ENCODE measurements at regions of chr20 and their contacts with region 1.

Region 1: GRCh38 chr20:38165089-38165989 is at the start of gene TGM2:
- DNase-seq: peak; percentile 72
- H3K4me3 ChIP-seq: peak within 1 kb of the TSS; percentile 30 to 43
- H3K27ac ChIP-seq: peak within 1 kb of the TSS; percentile 55 to 64
- H3K4me1 ChIP-seq: peaks cover 2% of the 10 kb centered on the region
- H3K27me3 ChIP-seq: no peaks in the 10 kb centered on the region
- CTCF ChIP-seq: peak; percentile 91 to 97 (median 94)
- POLR2A ChIP-seq: peak; percentile 60
- total RNA-seq, gene TGM2: 39.6 to 157 TPM

Region 2: DNA sequence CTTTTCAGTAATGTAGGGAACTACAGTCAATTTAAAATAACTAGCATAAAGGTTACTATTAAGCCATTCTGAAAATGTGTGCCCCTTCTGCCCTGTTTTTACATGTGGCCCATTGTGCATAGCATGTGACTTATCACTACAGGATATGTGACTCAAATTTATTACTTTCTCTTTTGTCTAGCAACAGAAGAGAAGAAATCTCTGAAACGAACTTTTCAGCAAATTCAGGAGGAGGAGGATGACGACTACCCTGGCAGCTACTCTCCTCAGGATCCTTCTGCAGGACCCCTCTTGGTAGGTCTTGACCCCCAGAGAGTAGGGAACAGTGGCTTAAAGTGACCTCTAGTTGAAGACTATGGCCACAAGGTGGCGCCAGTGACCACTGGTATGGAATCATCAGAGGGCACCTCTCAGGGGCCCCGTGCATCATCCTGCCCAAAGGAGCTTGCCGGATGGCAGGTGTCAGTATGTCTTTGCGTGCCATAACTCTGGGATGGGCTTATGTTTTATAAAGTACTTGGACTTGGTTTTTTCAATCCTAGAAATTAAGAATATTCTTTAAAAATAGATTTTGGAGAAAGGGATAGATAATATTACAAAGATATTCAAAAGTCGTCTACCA is 107.9 kb before region 1 on chr20:
- intact Hi-C with region 1: loop called (anchors 1 kb)
- DNase-seq: peak; percentile 82
- H3K4me3 ChIP-seq: no peak overlapping the region
- H3K27ac ChIP-seq: no peak overlapping the region
- H3K4me1 ChIP-seq: no peaks in the 10 kb centered on the region
- H3K27me3 ChIP-seq: no peaks in the 10 kb centered on the region
- CTCF ChIP-seq: peak; percentile 84 to 92 (median 86)
- POLR2A ChIP-seq: no peak

Region 3: DNA sequence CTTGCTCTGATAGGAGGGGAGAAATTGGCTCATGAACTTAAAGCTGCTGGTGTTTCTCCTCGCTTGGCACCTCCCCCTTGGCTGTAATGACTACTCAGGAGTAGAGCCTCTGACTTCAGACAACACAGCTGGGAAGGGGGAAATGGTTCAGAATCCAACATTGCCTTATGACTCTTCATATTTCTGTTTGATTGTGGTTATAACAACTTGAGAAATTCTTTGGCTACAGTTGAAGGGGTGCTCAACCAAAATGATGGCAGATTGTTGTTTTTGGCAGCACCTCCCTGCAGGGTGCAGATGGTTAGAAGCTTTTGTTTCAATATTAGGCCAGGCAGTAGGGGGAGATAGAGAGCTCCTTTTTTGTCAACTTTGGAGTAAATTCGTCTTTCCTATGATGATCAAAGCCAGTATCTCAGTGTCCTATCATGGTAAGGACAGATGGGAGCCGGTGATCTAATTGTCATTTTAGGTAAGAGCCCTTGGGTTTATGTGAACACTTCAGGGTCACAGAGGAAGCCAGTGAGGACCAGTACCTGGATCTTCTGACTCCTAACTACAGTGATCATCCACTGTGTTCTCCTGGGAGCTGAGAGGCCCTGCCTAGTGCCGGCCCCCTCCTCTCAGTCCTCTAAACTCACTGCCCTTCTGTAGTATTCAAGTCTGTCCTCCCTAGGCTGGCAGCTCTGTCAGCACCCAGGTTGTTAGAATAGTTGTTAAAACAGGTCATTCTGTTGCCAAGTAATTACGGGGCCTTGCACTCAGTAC is 91.8 kb before region 1 on chr20:
- intact Hi-C with region 1: loop called (anchors 5 kb)
- DNase-seq: peak; percentile 44
- H3K4me3 ChIP-seq: no peak overlapping the region
- H3K27ac ChIP-seq: peak overlapping the region; percentile 14 to 43
- H3K4me1 ChIP-seq: peaks cover 5% of the 10 kb centered on the region
- H3K27me3 ChIP-seq: no peaks in the 10 kb centered on the region
- CTCF ChIP-seq: peak; percentile 39 to 82 (median 76)
- POLR2A ChIP-seq: no peak

Region 4: DNA sequence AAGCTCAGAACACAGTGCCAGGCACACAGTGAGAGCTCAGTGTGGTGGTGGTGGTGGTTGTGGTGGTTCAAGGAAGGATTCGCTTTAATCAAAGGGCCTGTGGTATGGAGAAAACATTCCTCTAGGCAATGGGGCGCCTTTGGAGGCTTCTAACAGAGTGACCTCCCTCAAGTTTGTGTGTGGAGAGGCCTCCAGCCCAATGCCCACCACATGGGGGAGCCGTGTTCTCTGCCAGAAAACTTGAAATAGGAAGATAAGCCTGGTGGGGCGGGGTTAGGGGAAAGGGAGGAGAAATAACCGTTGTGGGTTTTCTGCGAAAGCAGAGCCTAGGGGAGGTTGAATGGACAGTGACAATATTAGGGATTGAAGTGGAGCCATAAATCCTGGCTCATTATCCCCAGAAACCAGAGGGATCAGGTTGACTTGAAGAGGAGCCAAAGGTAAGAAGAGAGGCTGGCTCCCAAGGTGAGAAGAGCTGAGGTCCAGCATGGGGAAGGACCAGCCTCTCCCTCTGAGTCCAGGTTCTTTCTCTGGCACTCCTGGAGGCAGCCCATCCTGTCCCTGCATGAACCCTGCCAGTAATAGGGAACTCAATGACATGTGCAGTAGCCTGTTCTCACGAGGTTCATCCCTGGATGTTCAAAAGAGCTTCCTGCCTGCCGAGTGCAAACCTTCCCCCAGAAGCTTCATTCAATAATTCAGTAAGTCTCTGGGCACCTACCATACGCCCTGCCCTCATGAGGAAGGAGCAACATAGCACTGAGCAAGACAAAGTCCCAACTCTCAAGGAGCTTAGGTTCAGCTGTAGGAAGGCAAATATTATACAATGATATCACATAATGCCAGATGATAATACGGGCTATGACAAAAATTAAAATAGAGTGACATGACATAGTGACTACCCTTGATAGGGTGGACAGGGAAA is 51.7 kb before region 1 on chr20:
- intact Hi-C with region 1: loop called (anchors 2 kb)
- DNase-seq: no peak
- H3K4me3 ChIP-seq: no peak overlapping the region
- H3K27ac ChIP-seq: no peak overlapping the region
- H3K4me1 ChIP-seq: peaks cover 11% of the 10 kb centered on the region
- H3K27me3 ChIP-seq: no peaks in the 10 kb centered on the region
- CTCF ChIP-seq: no peak
- POLR2A ChIP-seq: no peak

Region 5: DNA sequence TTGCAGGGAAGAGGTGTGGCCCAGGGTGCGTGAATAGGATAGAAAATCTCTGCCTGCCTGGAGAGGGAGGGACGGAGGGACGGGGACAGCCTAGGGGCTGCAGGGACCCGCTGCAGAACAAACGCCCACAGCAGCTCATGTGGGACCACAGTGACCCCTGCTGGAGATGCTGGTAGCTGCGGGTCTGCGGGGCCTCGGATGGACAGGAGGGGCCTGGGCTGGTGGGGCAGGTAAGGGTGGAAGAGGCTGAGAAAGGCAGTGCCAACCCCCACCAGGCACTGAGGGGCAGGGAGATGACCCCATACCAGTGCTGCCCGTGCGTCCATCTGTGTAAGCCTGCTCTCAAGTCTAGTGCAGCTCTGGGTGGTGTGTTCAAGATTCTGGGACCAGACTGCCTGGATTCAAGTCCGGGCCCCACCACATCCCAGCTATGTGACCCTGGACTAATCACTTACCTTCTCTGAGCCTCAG is 55.8 kb after region 1 on chr20:
- intact Hi-C with region 1: loop called (anchors 5 kb)
- DNase-seq: no peak
- H3K4me3 ChIP-seq: no peak overlapping the region
- H3K27ac ChIP-seq: no peak overlapping the region
- H3K4me1 ChIP-seq: peaks cover 2% of the 10 kb centered on the region
- H3K27me3 ChIP-seq: no peaks in the 10 kb centered on the region
- CTCF ChIP-seq: peak; percentile 37 to 89 (median 79)
- POLR2A ChIP-seq: peak; percentile 11

Region 6: DNA sequence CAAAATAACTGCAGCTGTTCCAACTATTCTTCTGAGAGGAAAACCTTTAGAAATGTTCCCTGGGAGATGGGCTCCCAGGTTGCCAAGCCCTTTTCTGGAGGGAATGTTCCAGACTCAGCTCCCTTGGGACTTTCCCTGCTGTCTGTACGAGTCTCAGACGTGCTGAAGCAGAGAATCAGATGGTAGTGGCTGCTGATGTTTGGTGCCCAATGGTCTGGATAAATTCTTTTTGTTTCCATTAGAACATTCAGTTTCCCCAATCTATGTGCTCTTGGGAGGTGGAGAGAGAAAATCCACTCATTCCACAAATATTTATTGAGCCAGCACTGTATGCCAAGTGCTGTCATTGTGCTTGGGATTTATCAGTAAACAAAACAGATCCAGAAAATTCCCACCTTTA is 229.8 kb after region 1 on chr20:
- intact Hi-C with region 1: no loop called
- DNase-seq: no peak
- H3K4me3 ChIP-seq: no peak overlapping the region
- H3K27ac ChIP-seq: no peak overlapping the region
- H3K4me1 ChIP-seq: no peaks in the 10 kb centered on the region
- H3K27me3 ChIP-seq: no peaks in the 10 kb centered on the region
- CTCF ChIP-seq: no peak
- POLR2A ChIP-seq: no peak

Region 7: DNA sequence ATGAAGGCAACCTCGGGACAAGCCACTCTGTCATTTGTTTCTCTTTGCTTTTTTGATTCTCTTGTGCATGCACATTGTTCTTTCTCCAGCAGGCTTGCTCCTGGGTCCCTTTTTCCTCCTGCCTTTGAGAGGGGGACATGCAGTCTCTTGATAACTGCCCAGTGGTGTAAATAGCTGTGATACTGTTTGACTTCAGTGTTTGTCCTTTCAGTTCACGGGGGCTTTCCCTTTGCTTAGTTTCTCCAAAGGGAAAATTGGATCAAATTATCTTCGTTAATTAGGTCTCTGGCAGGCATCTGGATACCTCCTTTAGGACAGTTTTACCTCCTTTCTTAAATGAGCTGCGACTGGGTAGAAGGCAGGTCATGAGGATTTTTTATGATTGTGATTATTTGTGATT is 348.8 kb after region 1 on chr20:
- intact Hi-C with region 1: no loop called
- DNase-seq: no peak
- H3K4me3 ChIP-seq: no peak overlapping the region
- H3K27ac ChIP-seq: no peak overlapping the region
- H3K4me1 ChIP-seq: no peaks in the 10 kb centered on the region
- H3K27me3 ChIP-seq: no peaks in the 10 kb centered on the region
- CTCF ChIP-seq: no peak
- POLR2A ChIP-seq: no peak

Measured in prostate gland (tissue), 2 donors.